ENCODE measurements at regions of chr9 and their contacts with region 1.

Region 1: DNA sequence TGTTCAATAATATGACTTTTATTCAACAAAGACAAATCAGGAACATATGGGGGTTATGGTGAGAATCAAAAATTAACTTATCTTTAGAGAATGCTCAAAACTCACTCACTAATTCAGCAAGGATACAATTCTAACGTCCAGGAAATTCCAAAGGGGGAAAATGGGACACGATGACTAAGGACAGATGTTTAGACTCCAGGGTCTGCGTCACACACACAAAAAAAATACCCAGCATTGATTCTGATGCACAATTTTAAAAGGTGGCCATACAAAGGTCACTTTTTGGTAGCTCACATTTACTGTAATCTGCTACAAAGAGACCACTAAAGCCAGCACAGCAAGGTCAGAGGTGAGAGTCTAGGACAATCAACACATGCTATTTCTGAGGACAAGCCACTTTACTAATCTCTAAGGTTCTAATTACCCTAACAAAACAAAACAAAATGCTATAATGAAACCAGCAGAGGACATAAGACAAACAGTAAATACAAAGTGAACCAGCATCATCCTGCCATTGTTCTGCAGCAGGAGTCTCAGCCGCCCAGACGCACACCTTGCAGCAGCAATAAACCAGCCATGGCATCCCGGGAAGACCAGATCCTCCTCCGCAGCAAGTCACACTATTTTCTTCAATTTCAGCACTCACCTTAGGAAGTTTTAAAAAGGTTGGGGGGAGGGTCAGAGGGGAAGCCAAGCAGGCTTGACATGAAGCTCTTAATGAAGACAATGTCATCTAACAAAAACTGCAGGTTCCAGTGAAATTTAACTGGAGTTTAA is 57.8 kb downstream of the TTC39B start:
- DNase-seq: no peak
- ATAC-seq: no peak
- H3K4me3 ChIP-seq: no peak overlapping the region
- H3K4me3 Mint-ChIP-seq: no peak overlapping the region
- H3K27ac ChIP-seq: no peak overlapping the region
- H3K27ac Mint-ChIP-seq: no peak overlapping the region
- H3K4me1 ChIP-seq: peaks cover 0 to 3% of the 10 kb centered on the region in 2 experiments
- H3K4me1 Mint-ChIP-seq: peaks cover 64 to 77% (median 74%) of the 10 kb centered on the region in 3 donors
- H3K27me3 ChIP-seq: no peaks in the 10 kb centered on the region
- H3K27me3 Mint-ChIP-seq: no peaks in the 10 kb centered on the region

Region 2: DNA sequence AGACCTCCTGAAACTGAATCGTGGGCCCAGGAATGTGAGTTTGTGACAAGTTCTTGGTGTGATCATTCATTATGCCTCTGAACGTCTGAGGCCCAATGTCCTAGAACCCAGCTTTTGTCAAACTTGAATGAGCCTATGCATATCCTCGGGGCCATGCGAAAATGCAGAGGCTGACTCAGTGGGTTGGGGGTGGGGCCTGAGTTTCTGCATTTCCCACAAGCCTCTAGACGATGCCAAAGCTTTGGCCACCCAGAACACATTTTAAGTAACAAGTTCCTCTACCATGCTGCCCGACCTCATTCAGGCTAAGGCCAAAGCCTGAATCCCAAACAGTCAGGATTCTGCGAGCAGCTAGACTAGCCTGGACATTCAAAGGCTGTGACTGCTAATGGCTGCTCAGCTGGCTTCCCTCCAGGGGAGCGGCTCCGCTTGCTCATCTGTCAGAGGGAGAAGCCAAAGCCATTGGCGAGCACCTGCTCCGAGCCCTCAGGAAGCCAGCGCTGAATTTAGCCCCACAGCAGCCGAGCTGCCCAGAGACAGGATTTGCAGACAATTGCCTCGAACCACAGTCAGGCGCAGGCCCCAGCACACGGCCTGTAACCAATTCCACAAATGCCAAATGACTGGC is 733.5 kb before region 1 on chr9:
- CTCF ChIA-PET with region 1: no interaction called
- POLR2A ChIA-PET with region 1: no interaction called
- DNase-seq: no peak
- ATAC-seq: no peak
- H3K4me3 ChIP-seq: no peak overlapping the region
- H3K4me3 Mint-ChIP-seq: no peak overlapping the region
- H3K27ac ChIP-seq: no peak overlapping the region
- H3K27ac Mint-ChIP-seq: no peak overlapping the region
- H3K4me1 ChIP-seq: no peaks in the 10 kb centered on the region
- H3K4me1 Mint-ChIP-seq: no peaks in the 10 kb centered on the region
- H3K27me3 ChIP-seq: no peaks in the 10 kb centered on the region
- H3K27me3 Mint-ChIP-seq: no peaks in the 10 kb centered on the region

Region 3: GRCh38 chr9:14935106-14935751 is 314.0 kb before region 1 on chr9:
- CTCF ChIA-PET with region 1: no interaction called
- POLR2A ChIA-PET with region 1: no interaction called
- DNase-seq: no peak
- ATAC-seq: no peak
- H3K4me3 ChIP-seq: no peak overlapping the region
- H3K4me3 Mint-ChIP-seq: no peak overlapping the region
- H3K27ac ChIP-seq: no peak overlapping the region
- H3K27ac Mint-ChIP-seq: no peak overlapping the region
- H3K4me1 ChIP-seq: no peaks in the 10 kb centered on the region
- H3K4me1 Mint-ChIP-seq: no peaks in the 10 kb centered on the region
- H3K27me3 ChIP-seq: no peaks in the 10 kb centered on the region
- H3K27me3 Mint-ChIP-seq: no peaks in the 10 kb centered on the region

Region 4: DNA sequence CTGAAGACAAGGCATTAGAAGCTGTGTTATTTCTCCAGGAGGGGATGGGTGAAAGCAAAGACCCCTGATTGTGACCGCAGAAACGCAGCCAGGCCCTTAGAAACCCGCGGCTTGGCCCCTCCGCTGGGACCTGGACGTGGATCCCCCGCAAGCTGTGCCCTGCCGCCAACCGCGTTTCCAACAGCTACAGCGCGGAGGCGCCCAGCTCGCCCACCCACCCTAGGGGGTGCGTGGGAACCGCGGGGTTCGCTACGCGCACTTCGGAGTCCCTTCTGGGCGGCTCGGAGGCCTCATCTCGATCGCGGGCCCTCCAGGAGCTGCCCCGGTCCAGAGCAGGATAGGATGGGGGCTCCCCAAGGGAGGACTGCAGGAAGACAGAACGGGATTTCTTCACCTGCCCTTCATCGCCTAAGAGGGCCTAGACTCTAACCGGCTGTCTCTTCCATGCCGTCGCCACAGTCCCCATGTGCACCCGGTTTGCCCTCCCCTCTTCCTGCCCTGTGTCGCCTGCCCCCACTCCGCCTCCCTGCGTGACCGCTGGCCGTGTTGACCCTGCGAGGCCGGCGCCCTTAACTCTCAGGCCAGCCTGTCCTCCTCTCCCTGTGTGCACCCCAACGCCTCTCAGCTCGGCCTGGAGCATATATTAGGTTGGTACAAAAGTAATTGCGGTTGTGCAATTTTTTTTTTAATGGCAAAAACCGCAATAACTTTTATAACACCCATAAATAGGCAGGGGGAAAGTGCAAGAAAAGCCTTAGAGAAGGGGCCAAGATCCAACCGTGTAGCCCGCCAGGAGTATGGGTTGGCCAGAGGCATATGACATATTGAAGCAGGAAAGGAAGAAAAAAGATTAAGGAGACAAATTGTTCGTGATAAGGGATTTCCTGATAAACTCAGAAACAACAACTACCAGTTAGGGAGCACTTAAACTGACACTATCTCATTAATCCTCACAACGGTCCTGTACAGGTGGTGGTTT is 270.9 kb before region 1 on chr9:
- CTCF ChIA-PET with region 1: no interaction called
- POLR2A ChIA-PET with region 1: no interaction called
- DNase-seq: no peak
- ATAC-seq: no peak
- H3K4me3 ChIP-seq: no peak overlapping the region
- H3K4me3 Mint-ChIP-seq: no peak overlapping the region
- H3K27ac ChIP-seq: no peak overlapping the region
- H3K27ac Mint-ChIP-seq: no peak overlapping the region
- H3K4me1 ChIP-seq: no peaks in the 10 kb centered on the region
- H3K4me1 Mint-ChIP-seq: no peaks in the 10 kb centered on the region
- H3K27me3 ChIP-seq: no peaks in the 10 kb centered on the region
- H3K27me3 Mint-ChIP-seq: no peaks in the 10 kb centered on the region

Region 5: DNA sequence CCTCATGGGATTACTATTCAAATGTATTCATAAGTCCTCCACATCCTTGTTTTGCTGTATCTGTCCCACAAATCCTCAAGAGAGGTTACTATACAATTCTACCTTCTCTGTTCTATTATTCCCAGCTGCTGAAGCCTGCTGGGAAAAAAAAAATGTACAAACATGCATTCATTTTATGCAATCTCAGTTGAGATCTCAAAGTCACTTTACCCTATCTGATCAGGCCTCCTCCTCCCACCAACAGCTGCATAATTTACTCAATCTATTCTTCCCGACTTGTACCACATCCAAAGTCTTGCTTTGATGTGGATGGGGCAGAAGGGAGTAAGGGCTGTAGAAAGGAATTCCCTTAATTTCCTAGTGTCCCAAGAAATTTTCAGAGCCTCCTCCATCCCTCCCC is 232.9 kb after region 1 on chr9:
- CTCF ChIA-PET with region 1: no interaction called
- POLR2A ChIA-PET with region 1: interaction called in 1 of 2 experiments, 13 read pairs
- DNase-seq: no peak
- ATAC-seq: no peak
- H3K4me3 ChIP-seq: no peak overlapping the region
- H3K4me3 Mint-ChIP-seq: no peak overlapping the region
- H3K27ac ChIP-seq: no peak overlapping the region
- H3K27ac Mint-ChIP-seq: peak overlapping the region; percentile 36 to 41
- H3K4me1 ChIP-seq: no peaks in the 10 kb centered on the region
- H3K4me1 Mint-ChIP-seq: peaks cover 33 to 49% (median 46%) of the 10 kb centered on the region in 3 donors
- H3K27me3 ChIP-seq: no peaks in the 10 kb centered on the region
- H3K27me3 Mint-ChIP-seq: no peaks in the 10 kb centered on the region

Measured in T-cell (primary cell).